Ascending aorta (tissue), 2 donors: ENCODE measurements at regions of chr15 and their contacts with region 1.

Region 1: DNA sequence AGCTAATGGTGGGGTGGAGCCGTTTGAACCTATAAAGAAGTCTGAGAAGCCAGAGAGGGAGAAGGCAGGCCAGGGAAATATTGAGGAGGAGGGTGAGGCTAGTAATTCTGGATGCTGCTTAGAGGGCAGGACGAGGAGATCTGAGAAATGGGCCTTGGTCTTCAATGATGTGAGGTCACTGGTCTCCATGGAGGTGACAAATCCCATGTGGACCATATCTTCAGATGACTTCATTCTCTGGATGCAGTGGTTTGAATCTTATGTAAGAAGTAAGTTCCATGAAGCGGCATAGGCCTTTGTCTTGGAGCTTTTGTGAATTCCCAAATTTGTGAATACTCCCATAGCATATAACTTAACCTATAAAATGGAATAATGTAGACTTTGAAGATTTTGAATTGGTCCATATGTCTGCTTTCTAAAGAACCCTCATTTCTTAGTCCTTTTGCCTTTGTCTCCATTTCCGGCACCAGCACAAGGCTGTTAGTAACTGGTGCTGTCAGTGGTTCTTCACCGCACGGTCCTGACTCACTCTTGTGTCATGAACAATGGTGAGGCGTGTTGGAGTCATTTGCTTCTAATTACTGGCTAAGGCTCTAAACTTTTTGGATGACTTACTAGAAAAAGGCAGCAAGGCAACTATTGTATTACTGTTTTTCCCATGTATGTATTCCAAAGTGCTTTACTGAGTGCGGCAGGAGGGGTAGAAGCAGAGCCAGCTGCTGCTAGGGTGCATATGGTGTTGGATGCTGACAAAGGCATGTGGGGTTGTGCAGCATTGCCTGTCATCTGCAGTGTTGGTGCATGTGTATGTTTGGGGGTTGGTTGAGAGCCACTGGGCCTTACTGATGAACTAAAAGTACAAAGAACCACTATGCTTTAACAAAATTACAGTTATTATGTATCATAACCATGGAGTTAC is 279.3 kb upstream of the C2CD4B start:
- DNase-seq: peak; percentile 31 to 78
- H3K4me3 ChIP-seq: no peak overlapping the region
- H3K27ac ChIP-seq: peak overlapping the region; percentile 37 to 66
- H3K4me1 ChIP-seq: peaks cover 4 to 36% of the 10 kb centered on the region in 2 donors
- H3K27me3 ChIP-seq: no peaks in the 10 kb centered on the region
- CTCF ChIP-seq: no peak

Region 2: GRCh38 chr15:62462721-62463120 is 18.4 kb after region 1 on chr15:
- intact Hi-C with region 1: loop called (anchors 2 kb)
- DNase-seq: no peak
- H3K4me3 ChIP-seq: no peak overlapping the region
- H3K27ac ChIP-seq: peak overlapping the region; percentile 51 to 52
- H3K4me1 ChIP-seq: peaks cover 4 to 32% of the 10 kb centered on the region in 2 donors
- H3K27me3 ChIP-seq: no peaks in the 10 kb centered on the region
- CTCF ChIP-seq: no peak

Region 3: GRCh38 chr15:62626903-62627302 is 182.5 kb after region 1 on chr15:
- intact Hi-C with region 1: no loop called
- DNase-seq: no peak
- H3K4me3 ChIP-seq: no peak overlapping the region
- H3K27ac ChIP-seq: no peak overlapping the region
- H3K4me1 ChIP-seq: peaks cover 11% of the 10 kb centered on the region in 2 donors
- H3K27me3 ChIP-seq: no peaks in the 10 kb centered on the region
- CTCF ChIP-seq: no peak